Activated T-helper 1 cell treated with anti-CD3 and anti-CD28 coated beads, Interleukin-12 subunit alpha, Interleukin-12 subunit beta, Interleukin-2, Interleukin-4 antibody, amounts not matched to agents 30 ng/mL and 10 ng/mL and 1 ng/mL, durations not matched to agents 14 hours and 24 hours and 36 hours (primary cell): ENCODE measurements at regions of chr7 and their contacts with region 1.

Region 1: DNA sequence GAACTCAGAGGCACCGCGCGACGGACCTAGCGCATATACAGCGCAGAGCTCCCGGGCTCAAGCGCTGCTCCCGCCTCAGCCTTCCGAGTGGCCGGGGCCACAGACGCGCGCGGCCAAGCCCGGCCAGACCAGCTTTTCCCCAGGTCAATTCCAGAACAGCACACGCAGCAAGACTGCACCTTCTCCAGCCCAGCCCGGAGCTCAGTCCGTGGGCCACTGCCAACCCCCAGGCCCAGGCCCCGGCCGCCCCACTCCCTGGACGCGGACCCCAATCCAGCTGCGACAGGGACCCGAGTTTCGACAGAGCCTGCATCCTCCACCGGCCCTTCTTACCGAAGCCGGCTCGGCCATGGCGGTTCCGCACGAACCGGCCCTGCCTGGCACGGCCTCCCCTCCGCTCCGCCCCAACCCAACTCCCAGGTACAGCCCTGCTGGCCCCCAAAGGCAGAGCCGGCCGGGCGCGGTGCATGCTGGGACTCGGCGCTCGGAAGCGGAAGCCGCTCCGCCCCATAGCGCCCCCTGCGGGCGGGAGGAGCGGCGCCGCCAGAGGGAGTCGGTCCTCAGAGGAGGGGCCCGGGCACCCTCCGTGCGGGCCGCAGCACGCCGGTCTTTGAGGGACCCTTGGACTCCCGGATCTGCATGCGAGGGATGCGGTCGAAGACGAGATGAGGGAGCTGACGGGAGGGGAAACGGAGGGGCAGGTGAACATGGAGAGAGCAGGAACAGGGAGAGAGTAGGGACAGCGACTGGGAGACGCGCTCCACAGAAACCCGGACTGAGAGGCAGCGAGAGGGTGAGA is at the start of gene ZNF425:
- DNase-seq: peak; percentile 93
- H3K4me3 Mint-ChIP-seq: peak within 1 kb of the TSS; percentile 100
- H3K27ac Mint-ChIP-seq: peak within 1 kb of the TSS; percentile 100
- H3K4me1 Mint-ChIP-seq: peaks cover 28% of the 10 kb centered on the region
- H3K27me3 Mint-ChIP-seq: no peaks in the 10 kb centered on the region
- total RNA-seq, gene ZNF425: 1.1 and 1.2 TPM in 2 replicates

Region 2: DNA sequence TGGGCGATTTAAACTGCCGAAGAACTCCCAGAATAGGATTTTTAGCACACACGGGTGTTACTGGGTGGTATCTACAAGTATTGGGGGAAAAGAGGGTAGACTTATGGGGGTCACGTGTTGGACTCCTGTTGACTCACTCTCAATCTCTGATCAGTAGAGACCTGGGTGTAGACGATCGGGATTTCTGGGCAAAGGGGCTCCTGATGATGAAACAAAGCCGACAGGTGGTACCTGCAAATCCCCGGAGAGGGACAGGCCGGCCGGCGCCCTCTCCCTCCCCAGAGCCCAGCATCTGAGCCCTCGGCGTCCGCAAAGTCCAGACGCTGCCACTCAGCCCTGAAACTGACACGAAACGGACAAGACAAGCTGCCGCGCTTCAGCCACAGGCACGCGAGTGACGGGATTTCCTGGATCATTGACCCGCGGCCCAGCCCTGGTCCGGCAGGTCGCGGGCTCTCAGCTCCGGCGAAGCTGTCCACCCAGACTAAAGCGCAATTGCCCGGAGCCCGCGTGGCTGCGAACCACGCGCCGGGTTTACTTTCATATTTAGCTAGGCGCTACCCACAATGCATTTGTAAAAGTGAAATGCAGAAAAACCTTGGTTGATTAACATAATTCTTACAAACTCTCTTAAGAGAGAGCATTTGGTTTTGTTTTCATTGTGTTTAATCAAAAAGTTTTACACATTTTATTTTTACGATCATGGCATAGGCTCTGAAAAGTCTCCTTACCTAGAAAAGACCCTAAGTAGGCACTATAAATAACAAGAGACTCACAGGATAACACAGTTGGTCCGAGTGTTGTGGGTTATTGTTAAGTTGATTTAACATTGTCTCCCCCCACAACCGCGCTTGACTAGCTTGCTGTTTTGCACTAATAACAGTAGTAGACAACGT is 185.1 kb before region 1 on chr7:
- intact Hi-C with region 1: loop called (anchors 1 kb)
- DNase-seq: peak; percentile 65
- H3K4me3 Mint-ChIP-seq: peak overlapping the region; percentile 96
- H3K27ac Mint-ChIP-seq: peak overlapping the region; percentile 98
- H3K4me1 Mint-ChIP-seq: peaks cover 31% of the 10 kb centered on the region
- H3K27me3 Mint-ChIP-seq: no peaks in the 10 kb centered on the region

Region 3: DNA sequence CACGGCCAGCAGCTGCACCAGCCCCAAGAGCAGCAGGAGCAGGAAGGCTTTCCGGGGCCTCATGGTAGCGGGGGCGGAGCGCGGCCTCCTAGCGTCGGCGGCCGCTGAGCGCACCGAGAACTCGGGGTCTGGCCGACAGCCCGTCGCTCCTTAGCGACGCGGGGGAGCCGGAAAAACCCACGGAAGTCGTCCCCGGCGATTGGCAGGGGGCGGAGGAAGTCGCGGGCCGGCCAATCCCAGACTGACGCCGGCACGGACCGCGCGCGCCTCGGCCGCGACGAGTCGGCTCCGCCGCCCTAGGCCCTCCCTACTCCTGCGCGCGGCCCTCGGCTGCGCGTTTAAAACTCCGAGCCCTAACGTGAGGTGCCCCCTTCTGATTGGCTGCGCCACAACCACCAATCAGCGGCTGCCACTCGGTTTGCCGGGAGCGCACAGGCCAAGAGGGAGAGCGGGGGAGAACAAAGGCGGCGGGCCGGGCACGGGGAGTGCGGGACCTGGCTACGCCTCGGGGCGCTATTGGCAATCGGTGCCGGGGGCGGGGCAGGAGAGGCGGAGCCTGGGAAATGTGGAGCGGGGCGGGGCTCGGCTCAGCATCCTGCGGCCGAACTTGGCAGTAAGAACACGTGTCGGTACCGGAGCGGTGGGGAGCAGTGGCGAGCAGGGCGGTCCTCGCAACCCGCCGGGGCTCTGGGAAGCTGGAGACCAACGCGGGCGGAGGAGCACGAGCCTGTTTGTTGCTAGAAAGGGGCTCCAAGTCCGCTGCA is 97.5 kb before region 1 on chr7 and contains the start of gene PDIA4:
- intact Hi-C with region 1: loop called (anchors 1 kb)
- DNase-seq: peak; percentile 100
- H3K4me3 Mint-ChIP-seq: peak within 1 kb of the TSS; percentile 98
- H3K27ac Mint-ChIP-seq: peak within 1 kb of the TSS; percentile 93
- H3K4me1 Mint-ChIP-seq: peaks cover 34% of the 10 kb centered on the region
- H3K27me3 Mint-ChIP-seq: peaks cover 2% of the 10 kb centered on the region
- total RNA-seq, gene PDIA4: 132 and 142 TPM in 2 replicates

Region 4: DNA sequence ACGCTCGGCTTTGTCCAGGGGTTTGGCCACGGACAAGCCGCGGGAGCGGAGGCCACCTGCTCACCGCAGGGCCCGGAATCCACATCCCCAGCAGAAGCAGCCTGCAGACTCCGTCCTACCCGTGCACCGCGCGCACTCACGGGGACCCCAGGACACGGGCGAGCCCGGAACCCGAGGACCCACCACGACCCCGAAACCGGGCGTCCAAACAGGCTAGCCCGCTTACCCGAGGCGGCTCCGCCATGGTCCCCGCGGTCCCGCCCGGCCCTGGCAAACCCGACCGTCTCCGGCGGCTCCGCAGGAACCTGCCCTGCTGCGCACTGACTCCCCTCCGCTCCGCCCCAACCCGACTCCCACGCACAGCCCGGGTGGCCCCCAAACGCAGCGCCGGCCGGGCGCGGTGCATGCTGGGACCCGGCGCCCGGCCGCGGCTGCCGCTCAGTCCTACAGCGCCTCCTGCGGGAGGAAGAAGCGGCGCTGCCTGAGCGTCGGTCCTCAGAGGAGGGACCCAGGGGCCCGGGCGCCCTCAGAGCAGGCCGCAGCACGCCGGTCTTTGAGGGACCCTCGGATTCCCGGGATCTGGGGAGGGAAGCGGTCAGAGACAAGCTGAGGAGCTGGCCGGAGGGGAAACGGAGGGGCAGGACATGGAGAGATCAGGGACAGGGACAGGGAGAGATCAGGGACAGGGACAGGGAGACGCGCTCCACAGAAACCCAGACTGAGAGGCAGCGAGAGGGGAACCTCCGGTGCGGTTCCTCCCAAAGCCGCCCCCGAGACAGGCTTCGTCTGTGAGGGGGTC is 35.5 kb before region 1 on chr7 and contains the start of gene ZNF786:
- intact Hi-C with region 1: loop called (anchors 1 kb)
- DNase-seq: peak; percentile 87
- H3K4me3 Mint-ChIP-seq: peak within 1 kb of the TSS; percentile 99
- H3K27ac Mint-ChIP-seq: peak within 1 kb of the TSS; percentile 100
- H3K4me1 Mint-ChIP-seq: peaks cover 17% of the 10 kb centered on the region
- H3K27me3 Mint-ChIP-seq: peaks cover 2% of the 10 kb centered on the region
- total RNA-seq, gene ZNF786: 9.9 and 10.9 TPM in 2 replicates

Region 5: DNA sequence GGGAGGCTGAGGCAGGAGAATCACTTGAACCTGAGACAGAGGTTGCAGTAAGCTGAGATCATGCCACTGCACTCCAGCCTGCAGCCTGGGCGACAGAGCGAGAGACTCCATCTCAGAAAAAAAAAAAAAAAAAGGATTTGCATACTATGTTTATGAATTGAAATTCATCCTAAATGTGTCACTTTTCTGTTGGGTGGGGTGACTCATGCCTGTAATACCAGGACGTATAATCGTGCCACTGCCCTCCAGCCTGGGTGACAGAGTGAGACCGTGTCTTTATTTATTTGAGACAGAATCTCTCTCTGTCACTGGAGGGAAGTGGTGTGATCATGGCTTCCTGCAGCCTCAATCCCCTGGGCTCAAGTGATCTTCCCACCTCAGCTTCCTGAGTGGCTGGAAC is 119.2 kb after region 1 on chr7:
- intact Hi-C with region 1: no loop called
- DNase-seq: no peak
- H3K4me3 Mint-ChIP-seq: no peak overlapping the region
- H3K27ac Mint-ChIP-seq: peak overlapping the region; percentile 80
- H3K4me1 Mint-ChIP-seq: peaks cover 47% of the 10 kb centered on the region
- H3K27me3 Mint-ChIP-seq: no peaks in the 10 kb centered on the region

Region 6: DNA sequence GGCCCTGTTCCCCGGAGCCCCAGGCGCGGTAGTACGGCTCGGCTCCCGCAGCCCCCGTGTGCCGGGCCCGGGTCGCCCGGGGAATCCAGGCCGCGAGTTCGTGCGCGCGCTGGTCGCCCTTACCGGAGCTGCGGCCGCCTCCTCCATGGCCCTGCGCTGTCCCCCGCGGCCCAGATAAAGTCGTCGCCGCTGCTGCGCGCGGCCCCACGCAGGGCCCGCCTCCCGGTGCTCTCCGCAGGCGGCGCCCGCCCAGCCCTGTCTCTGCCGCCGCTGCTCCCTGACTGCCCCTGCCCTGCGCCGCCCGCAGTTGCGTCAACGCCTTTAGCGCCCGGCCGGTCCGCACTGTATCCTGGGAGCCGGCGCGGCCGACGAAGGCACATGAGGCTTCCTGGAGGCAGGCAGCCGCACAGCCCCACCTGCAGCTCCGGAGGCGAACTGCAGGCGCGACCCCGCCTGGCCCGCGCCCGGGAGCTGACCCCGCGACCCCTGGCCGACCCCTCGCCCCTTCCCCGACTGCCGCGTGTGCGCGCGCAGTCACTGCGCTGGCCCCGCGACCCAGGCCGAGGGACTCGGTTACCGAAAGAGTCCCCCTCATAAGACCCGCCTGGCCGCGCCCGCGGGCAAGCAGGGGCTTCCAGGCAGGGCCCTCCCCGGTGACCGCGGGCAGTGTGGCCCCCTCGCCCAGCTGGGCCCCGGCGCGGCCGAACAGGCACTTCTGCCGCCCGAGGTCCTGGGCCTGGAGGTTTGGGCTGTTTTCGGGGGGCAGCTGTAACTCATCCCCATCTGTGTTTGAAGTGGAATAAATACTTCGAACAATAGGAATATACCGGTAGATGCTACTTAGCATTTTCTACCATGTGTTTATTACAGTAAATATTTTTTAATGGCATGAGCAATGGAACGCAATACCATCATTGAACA is 498.6 kb after region 1 on chr7:
- intact Hi-C with region 1: loop called (anchors 2 kb)
- DNase-seq: peak; percentile 91
- H3K4me3 Mint-ChIP-seq: peak overlapping the region; percentile 89
- H3K27ac Mint-ChIP-seq: peak overlapping the region; percentile 83
- H3K4me1 Mint-ChIP-seq: peaks cover 32% of the 10 kb centered on the region
- H3K27me3 Mint-ChIP-seq: peaks cover 6% of the 10 kb centered on the region